Posterior cingulate gyrus (tissue), 11 donors: ENCODE measurements at regions of chr6 and their contacts with region 1.

Region 1: GRCh38 chr6:56708810-56709597 is 66.3 kb upstream of the DST start:
- DNase-seq: no peak

Region 2: DNA sequence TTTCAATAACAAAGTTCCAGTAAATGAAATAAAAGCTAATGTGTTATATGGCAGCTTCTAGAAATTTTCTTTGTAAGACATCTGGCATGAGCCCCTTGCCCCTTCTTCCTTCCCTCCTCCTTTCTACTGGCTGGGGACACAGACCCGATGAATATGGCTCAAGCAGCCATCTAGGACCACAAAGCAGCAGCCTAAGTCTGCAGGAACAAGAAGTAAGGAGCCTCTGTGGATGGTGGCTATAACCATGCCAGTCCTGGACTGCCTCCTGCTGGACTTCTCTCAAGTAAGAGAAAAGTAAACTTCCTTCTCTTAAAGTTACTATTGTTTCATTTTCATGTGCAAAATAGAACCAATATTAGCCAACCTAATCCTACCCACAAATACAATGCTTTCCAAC is 48.6 kb after region 1 on chr6:
- intact Hi-C with region 1: loop called (anchors 2 kb)
- DNase-seq: peak in 2 of 10 donors; percentile 51 to 83

Region 3: GRCh38 chr6:56764081-56764566 is 55.1 kb after region 1 on chr6:
- intact Hi-C with region 1: loop called (anchors 2 kb)
- DNase-seq: peak in 1 of 10 donors; percentile 51

Region 4: GRCh38 chr6:56787209-56787608 is 78.2 kb after region 1 on chr6:
- intact Hi-C with region 1: no loop called
- DNase-seq: no peak

Region 5: GRCh38 chr6:56851541-56852259 is 142.7 kb after region 1 on chr6:
- intact Hi-C with region 1: loop called (anchors 2 kb)
- DNase-seq: peak in 8 of 10 donors; percentile 13 to 87 (median 44)